Activated naive CD4-positive, alpha-beta T cell treated with anti-CD3 and anti-CD28 coated beads for 36 hours (primary cell): ENCODE measurements at regions of chr7 and their contacts with region 1.

Region 1: GRCh38 chr7:101058355-101058754 is 26.9 kb upstream of the TRIM56 start:
- DNase-seq: peak; percentile 68
- H3K4me3 Mint-ChIP-seq: no peak overlapping the region
- H3K27ac Mint-ChIP-seq: no peak overlapping the region
- H3K4me1 Mint-ChIP-seq: peaks cover 4% of the 10 kb centered on the region
- H3K27me3 Mint-ChIP-seq: peaks cover 32% of the 10 kb centered on the region

Region 2: DNA sequence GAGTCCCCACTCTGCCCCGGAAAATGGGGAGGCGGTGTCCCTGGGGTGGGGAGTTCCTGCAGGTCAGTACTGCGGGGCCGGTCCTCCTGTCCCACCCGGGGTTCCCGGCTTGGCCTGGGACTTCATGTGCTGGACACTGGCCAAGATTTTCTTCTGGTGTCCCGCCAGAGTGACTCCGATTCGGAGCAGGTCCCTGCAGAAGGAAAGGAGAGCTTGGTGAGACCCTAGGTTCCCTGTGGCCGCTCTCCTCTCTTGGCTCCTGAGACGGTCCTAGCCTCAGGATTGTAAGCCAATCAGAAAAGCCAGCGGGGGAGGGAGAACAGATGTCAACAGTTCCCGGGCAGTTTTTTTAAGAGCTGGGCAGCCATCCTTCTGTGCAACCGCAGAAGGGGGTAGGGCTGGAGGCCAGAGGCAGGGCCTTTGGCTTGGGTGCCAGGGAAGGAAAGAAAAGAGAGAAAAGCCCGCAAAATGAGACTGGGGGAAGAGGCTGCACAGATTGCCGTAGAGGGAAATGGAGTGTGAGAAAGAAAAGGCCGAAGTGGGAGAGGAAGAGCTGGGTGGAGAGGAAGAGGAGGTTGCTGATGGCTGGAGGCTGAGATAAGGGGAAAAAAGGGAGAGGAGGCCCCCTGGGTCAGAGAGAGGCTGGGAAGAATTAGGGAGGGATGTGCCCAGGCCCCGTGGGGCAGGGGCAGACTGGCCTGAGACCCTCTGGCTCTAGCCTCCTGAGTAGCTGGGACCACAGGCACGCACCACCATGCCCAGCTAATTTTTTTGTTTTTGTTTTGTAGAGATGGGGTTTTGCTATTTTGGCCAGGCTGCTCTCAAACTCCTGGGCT is 254.7 kb before region 1 on chr7:
- CTCF ChIA-PET with region 1: no interaction called
- intact Hi-C with region 1: loop called (anchors 2 kb)
- DNase-seq: peak; percentile 58
- H3K4me3 Mint-ChIP-seq: no peak overlapping the region
- H3K27ac Mint-ChIP-seq: no peak overlapping the region
- H3K4me1 Mint-ChIP-seq: peaks cover 9% of the 10 kb centered on the region
- H3K27me3 Mint-ChIP-seq: peaks cover 4% of the 10 kb centered on the region

Region 3: DNA sequence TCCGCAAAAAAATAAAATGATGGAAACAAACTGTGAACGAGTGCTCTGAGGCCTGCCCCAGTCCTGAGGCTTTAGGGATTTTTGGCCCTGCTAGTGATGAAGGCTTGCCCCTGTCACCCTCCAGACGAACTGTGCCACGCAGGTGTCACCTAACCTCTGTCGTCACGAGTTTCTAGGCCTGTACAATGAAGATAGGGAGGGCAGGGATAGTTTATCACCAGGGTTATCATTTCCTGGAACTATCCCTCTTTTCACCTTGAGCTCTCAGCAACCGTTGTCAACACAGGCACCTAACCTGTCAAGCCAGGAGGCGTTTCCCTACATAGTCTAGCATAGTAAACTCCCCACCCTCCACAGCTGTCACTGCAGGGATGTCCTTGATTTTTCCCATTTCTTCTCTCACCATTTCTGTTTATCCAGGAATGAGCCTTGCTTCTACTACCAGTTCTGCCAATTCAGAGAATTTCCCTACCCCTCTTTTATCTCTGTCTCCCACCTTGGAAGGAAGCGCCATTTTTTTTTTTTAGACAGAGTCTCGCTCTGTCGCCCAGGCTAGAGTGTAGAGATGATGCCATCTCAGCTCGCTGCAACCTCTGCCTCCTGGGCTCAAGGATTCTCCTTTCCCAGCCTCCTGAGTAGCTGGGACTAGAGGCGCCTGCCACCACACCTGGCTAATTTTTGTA is 160.4 kb before region 1 on chr7:
- CTCF ChIA-PET with region 1: interaction called, 20 read pairs
- intact Hi-C with region 1: loop called (anchors 1 kb)
- DNase-seq: no peak
- H3K4me3 Mint-ChIP-seq: no peak overlapping the region
- H3K27ac Mint-ChIP-seq: no peak overlapping the region
- H3K4me1 Mint-ChIP-seq: peaks cover 8% of the 10 kb centered on the region
- H3K27me3 Mint-ChIP-seq: peaks cover 29% of the 10 kb centered on the region

Region 4: DNA sequence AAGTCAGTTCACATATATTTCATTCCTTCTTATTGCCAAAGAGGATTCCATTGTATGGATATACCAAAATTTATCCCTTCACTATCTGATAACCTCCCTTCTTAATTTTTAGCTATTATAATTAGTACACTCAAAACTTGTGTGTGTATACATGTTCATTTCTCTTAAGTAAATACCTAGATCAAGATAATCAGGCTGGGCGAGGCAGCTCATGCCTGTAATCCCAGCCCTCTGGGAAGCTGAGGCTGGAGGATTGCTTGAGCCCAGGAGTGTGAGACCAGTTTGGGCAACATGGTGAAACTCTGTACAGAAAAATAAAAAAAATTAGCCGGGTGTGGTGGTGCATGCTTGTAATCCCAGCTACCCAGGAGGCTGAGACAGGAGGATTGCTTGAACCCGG is 146.9 kb before region 1 on chr7:
- CTCF ChIA-PET with region 1: no interaction called
- intact Hi-C with region 1: no loop called
- DNase-seq: no peak
- H3K4me3 Mint-ChIP-seq: no peak overlapping the region
- H3K27ac Mint-ChIP-seq: no peak overlapping the region
- H3K4me1 Mint-ChIP-seq: peaks cover 5% of the 10 kb centered on the region
- H3K27me3 Mint-ChIP-seq: peaks cover 3% of the 10 kb centered on the region

Region 5: GRCh38 chr7:100949227-100949932 is 109.0 kb before region 1 on chr7 and contains the start of gene MUC3A:
- CTCF ChIA-PET with region 1: no interaction called
- intact Hi-C with region 1: no loop called
- DNase-seq: no peak
- H3K4me3 Mint-ChIP-seq: no peak within 1 kb of the TSS
- H3K27ac Mint-ChIP-seq: no peak within 1 kb of the TSS
- H3K4me1 Mint-ChIP-seq: no peaks in the 10 kb centered on the region
- H3K27me3 Mint-ChIP-seq: peaks cover 18% of the 10 kb centered on the region
- total RNA-seq, gene MUC3A: not detected